Naive thymus-derived CD4-positive, alpha-beta T cell (primary cell): ENCODE measurements at regions of chr22 and their contacts with region 1.

Region 1: GRCh38 chr22:22959147-22959827 is 71.7 kb downstream of the IGLL5 start:
- DNase-seq: peak; percentile 37 to 84 (median 64)
- ATAC-seq: peak; percentile 81
- H3K4me3 ChIP-seq: no peak overlapping the region
- H3K4me3 Mint-ChIP-seq: no peak overlapping the region
- H3K27ac ChIP-seq: no peak overlapping the region
- H3K27ac Mint-ChIP-seq: no peak overlapping the region
- H3K4me1 ChIP-seq: no peaks in the 10 kb centered on the region
- H3K4me1 Mint-ChIP-seq: peaks cover 0 to 10% (median 4%) of the 10 kb centered on the region in 7 donors
- H3K27me3 ChIP-seq: no peaks in the 10 kb centered on the region
- H3K27me3 Mint-ChIP-seq: peaks cover 8 to 44% (median 23%) of the 10 kb centered on the region in 5 donors

Region 2: DNA sequence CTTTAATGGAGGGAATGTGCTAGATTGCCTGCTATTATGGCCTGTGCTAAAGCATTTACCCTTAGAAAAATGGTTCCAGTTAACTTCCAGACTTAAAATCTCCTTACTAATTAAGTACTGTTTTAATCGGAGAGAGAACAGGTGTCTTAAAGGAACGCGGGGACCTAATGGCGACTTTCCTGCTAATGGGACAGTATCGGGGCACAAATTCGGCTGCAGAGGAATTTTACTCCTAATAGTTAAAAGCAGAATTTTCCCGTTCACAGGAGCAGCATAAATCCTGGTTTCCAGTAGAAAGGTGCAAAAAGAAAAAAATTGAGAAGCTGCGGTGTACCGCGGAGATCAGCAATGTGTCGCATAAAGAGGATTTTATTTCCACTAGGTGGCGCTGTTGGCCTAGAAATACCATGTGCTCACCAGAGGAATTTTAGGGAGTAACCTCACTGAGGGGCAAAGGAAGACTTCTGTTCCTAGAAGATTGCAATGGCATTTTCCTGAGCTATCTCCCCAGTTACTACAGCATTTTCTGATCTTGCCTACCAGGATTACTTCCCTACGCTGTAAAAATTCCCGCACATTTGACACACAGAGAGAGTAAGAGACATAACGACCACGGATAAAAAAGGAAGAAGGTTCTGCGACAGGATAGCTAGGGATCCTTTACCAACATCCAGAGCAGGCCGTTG is 495.3 kb before region 1 on chr22:
- CTCF ChIA-PET with region 1: interaction called, 4 read pairs
- POLR2A ChIA-PET with region 1: no interaction called
- intact Hi-C with region 1: loop called in 1 of 2 experiments (anchors 2 kb)
- DNase-seq: peak; percentile 10 to 55 (median 42)
- ATAC-seq: peak; percentile 44
- H3K4me3 ChIP-seq: no peak overlapping the region
- H3K4me3 Mint-ChIP-seq: no peak overlapping the region
- H3K27ac ChIP-seq: no peak overlapping the region
- H3K27ac Mint-ChIP-seq: no peak overlapping the region
- H3K4me1 ChIP-seq: no peaks in the 10 kb centered on the region
- H3K4me1 Mint-ChIP-seq: no peaks in the 10 kb centered on the region
- H3K27me3 ChIP-seq: peaks cover 0 to 11% of the 10 kb centered on the region in 2 donors
- H3K27me3 Mint-ChIP-seq: peaks cover 27 to 50% (median 48%) of the 10 kb centered on the region in 5 donors

Region 3: GRCh38 chr22:22748297-22748743 is 211.0 kb before region 1 on chr22:
- CTCF ChIA-PET with region 1: interaction called, 15 read pairs
- POLR2A ChIA-PET with region 1: no interaction called
- intact Hi-C with region 1: loop called in 1 of 2 experiments (anchors 1 kb)
- DNase-seq: peak in 6 of 9 donors; percentile 17 to 34 (median 26)
- ATAC-seq: peak; percentile 78
- H3K4me3 ChIP-seq: no peak overlapping the region
- H3K4me3 Mint-ChIP-seq: no peak overlapping the region
- H3K27ac ChIP-seq: no peak overlapping the region
- H3K27ac Mint-ChIP-seq: peak overlapping the region in 2 of 9 donors; percentile 21 to 34
- H3K4me1 ChIP-seq: peaks cover 6 to 30% of the 10 kb centered on the region in 2 donors
- H3K4me1 Mint-ChIP-seq: peaks cover 2 to 23% (median 15%) of the 10 kb centered on the region in 7 donors
- H3K27me3 ChIP-seq: no peaks in the 10 kb centered on the region
- H3K27me3 Mint-ChIP-seq: peaks cover 0 to 19% (median 4%) of the 10 kb centered on the region in 5 donors

Region 4: GRCh38 chr22:22802339-22802970 is 156.8 kb before region 1 on chr22:
- CTCF ChIA-PET with region 1: interaction called, 14 read pairs
- POLR2A ChIA-PET with region 1: interaction called, 3 read pairs
- intact Hi-C with region 1: loop called (anchors 1 to 5 kb)
- DNase-seq: peak in 5 of 9 donors; percentile 26 to 53 (median 34)
- ATAC-seq: peak; percentile 79
- H3K4me3 ChIP-seq: no peak overlapping the region
- H3K4me3 Mint-ChIP-seq: no peak overlapping the region
- H3K27ac ChIP-seq: no peak overlapping the region
- H3K27ac Mint-ChIP-seq: peak overlapping the region in 1 of 9 donors; percentile 10
- H3K4me1 ChIP-seq: peaks cover 0 to 41% of the 10 kb centered on the region in 2 donors
- H3K4me1 Mint-ChIP-seq: peaks cover 0 to 29% (median 16%) of the 10 kb centered on the region in 7 donors
- H3K27me3 ChIP-seq: no peaks in the 10 kb centered on the region
- H3K27me3 Mint-ChIP-seq: peaks cover 0 to 51% (median 0%) of the 10 kb centered on the region in 5 donors

Region 5: DNA sequence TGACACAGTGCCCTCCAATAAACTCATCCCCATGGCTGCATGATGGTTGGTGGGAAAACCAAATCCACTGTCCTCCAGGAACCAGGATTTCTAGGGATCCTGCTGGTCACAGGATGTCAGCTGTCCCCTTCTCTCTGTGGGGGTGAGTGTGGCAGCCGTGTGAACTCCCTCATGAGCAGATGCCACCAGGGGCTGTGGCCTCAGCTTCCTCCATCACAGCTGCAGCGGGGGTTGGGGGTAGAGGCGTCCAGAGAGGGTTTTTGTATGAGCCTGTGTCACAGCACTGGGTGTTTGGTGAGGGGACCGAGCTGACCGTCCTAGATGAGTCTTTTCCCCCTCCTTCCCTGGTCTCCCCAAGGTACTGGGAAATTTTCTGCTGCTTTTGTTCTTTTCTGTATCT is 45.3 kb before region 1 on chr22:
- CTCF ChIA-PET with region 1: no interaction called
- POLR2A ChIA-PET with region 1: no interaction called
- intact Hi-C with region 1: no loop called
- DNase-seq: no peak
- ATAC-seq: no peak
- H3K4me3 ChIP-seq: no peak overlapping the region
- H3K4me3 Mint-ChIP-seq: no peak overlapping the region
- H3K27ac ChIP-seq: no peak overlapping the region
- H3K27ac Mint-ChIP-seq: no peak overlapping the region
- H3K4me1 ChIP-seq: no peaks in the 10 kb centered on the region
- H3K4me1 Mint-ChIP-seq: peaks cover 0 to 2% (median 0%) of the 10 kb centered on the region in 7 donors
- H3K27me3 ChIP-seq: no peaks in the 10 kb centered on the region
- H3K27me3 Mint-ChIP-seq: peaks cover 0 to 15% (median 0%) of the 10 kb centered on the region in 5 donors

Region 6: GRCh38 chr22:23128269-23129108 is 169.2 kb after region 1 on chr22:
- CTCF ChIA-PET with region 1: interaction called, 147 read pairs
- POLR2A ChIA-PET with region 1: interaction called, 5 read pairs
- intact Hi-C with region 1: loop called (anchors 1 kb)
- DNase-seq: peak; percentile 46 to 74 (median 68)
- ATAC-seq: peak; percentile 92
- H3K4me3 ChIP-seq: no peak overlapping the region
- H3K4me3 Mint-ChIP-seq: no peak overlapping the region
- H3K27ac ChIP-seq: no peak overlapping the region
- H3K27ac Mint-ChIP-seq: peak overlapping the region in 1 of 9 donors; percentile 82
- H3K4me1 ChIP-seq: no peaks in the 10 kb centered on the region
- H3K4me1 Mint-ChIP-seq: peaks cover 0 to 5% (median 0%) of the 10 kb centered on the region in 7 donors
- H3K27me3 ChIP-seq: no peaks in the 10 kb centered on the region
- H3K27me3 Mint-ChIP-seq: peaks cover 0 to 6% (median 0%) of the 10 kb centered on the region in 5 donors

Region 7: DNA sequence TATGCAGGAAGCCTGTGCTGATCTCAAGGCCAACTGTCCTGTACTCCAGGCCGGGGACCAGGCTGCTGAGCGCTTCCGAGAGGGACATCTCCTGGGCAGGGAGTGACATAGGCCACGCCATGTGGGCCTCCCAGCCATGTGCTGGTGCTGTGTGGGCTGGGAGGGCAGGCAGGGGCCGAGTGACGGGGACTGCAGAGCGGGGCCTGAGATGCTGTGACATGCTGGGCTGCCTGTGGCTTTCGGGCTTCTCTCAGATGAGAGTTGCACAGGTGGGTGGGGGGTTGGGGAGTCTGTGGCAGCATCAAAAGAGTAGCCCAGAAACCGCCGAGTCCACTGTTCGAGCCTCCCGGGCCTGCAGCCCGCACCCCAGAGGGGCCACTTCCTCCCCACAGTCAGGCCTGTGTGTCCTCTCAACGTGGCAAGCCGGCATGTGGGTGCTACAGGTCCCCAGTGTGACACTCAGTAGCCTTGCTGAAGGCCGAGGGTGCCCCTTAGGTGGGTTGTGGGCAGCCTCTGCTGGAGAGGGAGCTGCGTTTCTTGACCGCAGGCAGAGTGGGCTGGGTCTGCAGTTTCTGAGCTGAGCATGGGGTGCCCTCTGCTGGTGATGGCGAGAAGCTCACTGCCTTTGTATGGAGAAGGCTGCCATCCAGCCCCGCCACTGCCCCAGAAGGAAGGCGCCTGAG is 322.3 kb after region 1 on chr22:
- CTCF ChIA-PET with region 1: interaction called, 15 read pairs
- POLR2A ChIA-PET with region 1: no interaction called
- intact Hi-C with region 1: loop called in 1 of 2 experiments (anchors 1 kb)
- DNase-seq: peak; percentile 57 to 80 (median 73)
- ATAC-seq: peak; percentile 86
- H3K4me3 ChIP-seq: no peak overlapping the region
- H3K4me3 Mint-ChIP-seq: no peak overlapping the region
- H3K27ac ChIP-seq: no peak overlapping the region
- H3K27ac Mint-ChIP-seq: no peak overlapping the region
- H3K4me1 ChIP-seq: peaks cover 7 to 27% of the 10 kb centered on the region in 2 donors
- H3K4me1 Mint-ChIP-seq: peaks cover 0 to 29% (median 9%) of the 10 kb centered on the region in 7 donors
- H3K27me3 ChIP-seq: no peaks in the 10 kb centered on the region
- H3K27me3 Mint-ChIP-seq: no peaks in the 10 kb centered on the region

Region 8: GRCh38 chr22:23539135-23539838 is 580.0 kb after region 1 on chr22:
- CTCF ChIA-PET with region 1: no interaction called
- POLR2A ChIA-PET with region 1: no interaction called
- intact Hi-C with region 1: loop called in 1 of 2 experiments (anchors 2 kb)
- DNase-seq: peak; percentile 41 to 73 (median 65)
- ATAC-seq: peak; percentile 100
- H3K4me3 ChIP-seq: no peak overlapping the region
- H3K4me3 Mint-ChIP-seq: peak overlapping the region in 6 of 10 donors; percentile 26 to 62 (median 46)
- H3K27ac ChIP-seq: no peak overlapping the region
- H3K27ac Mint-ChIP-seq: no peak overlapping the region
- H3K4me1 ChIP-seq: peaks cover 3 to 5% of the 10 kb centered on the region in 2 donors
- H3K4me1 Mint-ChIP-seq: peaks cover 0 to 11% (median 10%) of the 10 kb centered on the region in 7 donors
- H3K27me3 ChIP-seq: no peaks in the 10 kb centered on the region
- H3K27me3 Mint-ChIP-seq: peaks cover 0 to 26% (median 0%) of the 10 kb centered on the region in 5 donors